Activated B cell treated with CpG ODN at 0.5 μM for 24 hours (primary cell): ENCODE measurements at regions of chr22 and their contacts with region 1.

Region 1: DNA sequence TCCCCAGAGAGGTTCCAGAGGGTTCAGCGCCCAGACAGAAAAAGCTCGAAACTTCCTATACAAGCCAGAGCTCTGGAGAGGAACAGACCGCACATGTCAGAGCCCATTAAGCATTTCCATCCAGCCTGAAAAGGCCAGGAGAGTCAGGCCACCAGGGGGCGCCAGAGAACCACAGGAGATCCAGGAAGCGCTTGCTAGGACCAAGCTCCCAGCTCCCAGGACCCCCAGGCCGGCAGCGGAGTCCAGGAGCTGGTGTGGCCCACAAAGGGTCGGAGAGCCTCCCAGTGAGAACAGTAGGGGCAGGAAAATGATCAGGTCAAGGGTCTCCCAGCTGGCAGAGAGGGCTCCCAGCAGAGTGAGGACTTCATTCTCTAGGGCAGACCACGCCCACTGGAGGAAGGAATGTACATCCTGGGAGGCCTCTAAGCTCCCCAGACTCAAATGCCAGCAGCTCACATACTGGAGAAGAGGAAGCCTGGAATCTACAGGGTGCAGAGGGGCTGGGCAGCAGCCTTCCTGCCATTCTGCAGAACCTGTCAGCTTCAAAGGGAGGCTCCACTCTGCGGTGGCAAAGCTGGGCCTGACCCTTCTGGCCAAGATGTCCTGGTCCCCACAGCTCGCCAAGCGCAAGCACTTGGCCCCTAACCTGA is 2.1 kb upstream of the MEI1 start:
- DNase-seq: peak; percentile 91
- ATAC-seq: peak; percentile 83
- H3K4me3 Mint-ChIP-seq: peak overlapping the region; percentile 63
- H3K27ac Mint-ChIP-seq: peak overlapping the region; percentile 72
- H3K4me1 Mint-ChIP-seq: peaks cover 12% of the 10 kb centered on the region
- H3K27me3 Mint-ChIP-seq: no peaks in the 10 kb centered on the region
- CTCF ChIP-seq: peak; percentile 51

Region 2: DNA sequence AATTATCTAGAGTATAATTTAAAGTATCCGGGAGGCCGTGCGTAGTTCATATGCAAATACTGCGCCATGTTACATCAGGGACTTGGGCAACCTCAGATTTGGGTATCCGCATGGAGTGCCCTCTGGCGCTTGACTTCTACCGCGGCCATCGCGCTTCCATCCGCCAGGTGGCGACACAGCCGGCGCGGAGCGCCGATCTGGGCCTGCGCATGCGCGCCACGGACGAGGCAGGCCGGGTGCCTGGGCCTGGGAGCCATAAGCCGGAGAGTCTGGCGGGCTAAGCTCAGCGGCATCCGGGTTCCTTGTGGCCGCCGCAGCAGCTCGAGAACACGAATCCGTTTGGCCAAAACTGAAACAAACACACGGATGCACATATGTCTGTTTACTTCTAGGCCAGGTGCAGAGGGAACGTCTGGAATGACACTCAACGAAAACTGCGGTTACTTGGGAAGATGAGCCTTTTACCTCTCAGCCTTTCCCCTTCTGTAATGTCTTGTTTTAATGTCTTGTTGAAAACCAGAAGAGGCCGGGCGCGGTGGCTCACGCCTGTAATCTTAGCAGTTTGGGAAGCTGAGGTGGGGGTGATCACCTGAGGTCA is 30.5 kb before region 1 on chr22:
- CTCF ChIA-PET with region 1: interaction called, 18 read pairs
- POLR2A ChIA-PET with region 1: interaction called, 7 read pairs
- intact Hi-C with region 1: no loop called
- DNase-seq: peak; percentile 94
- ATAC-seq: peak; percentile 95
- H3K4me3 Mint-ChIP-seq: peak overlapping the region; percentile 84
- H3K27ac Mint-ChIP-seq: peak overlapping the region; percentile 92
- H3K4me1 Mint-ChIP-seq: peaks cover 5% of the 10 kb centered on the region
- H3K27me3 Mint-ChIP-seq: no peaks in the 10 kb centered on the region
- CTCF ChIP-seq: peak; percentile 74

Region 3: DNA sequence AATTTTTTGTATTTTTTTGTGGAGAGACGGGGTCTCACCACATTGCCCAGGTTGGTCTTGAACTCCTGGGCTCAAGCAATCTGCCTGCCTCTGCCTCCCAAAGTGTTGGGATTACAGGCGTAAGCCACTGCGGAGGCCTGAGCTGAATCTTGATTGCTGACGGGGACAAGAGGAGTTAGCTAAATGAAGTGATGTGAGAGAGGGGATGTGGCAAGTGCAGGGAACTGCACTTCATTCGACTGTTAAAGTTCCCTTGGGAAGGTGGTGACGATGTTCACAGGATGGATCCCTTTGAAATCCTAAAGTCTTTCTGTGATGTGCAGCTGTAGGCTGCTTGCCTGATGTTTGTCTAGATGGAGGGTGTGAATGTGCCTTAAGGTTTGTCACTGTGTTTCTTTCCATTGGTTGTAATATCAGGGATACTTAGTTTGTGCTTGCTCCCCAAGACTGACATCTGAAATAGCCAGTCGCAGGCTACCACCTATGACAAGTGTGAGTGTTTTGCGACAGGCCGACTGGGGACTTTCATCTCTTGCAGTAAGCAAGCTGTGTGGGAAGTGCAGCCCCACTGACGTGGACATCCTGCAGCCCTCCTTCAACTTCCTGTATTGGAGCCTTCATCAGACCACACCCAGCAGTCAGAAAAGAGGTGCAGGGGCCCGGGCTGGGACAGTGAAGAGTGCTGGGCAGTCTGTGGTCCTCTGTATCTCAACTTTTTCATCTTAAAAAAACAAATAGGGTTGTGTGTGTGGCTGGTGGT is 83.7 kb after region 1 on chr22:
- CTCF ChIA-PET with region 1: interaction called, 28 read pairs
- POLR2A ChIA-PET with region 1: interaction called, 8 read pairs
- intact Hi-C with region 1: loop called (anchors 5 kb)
- DNase-seq: peak; percentile 60
- ATAC-seq: peak; percentile 96
- H3K4me3 Mint-ChIP-seq: peak overlapping the region; percentile 86
- H3K27ac Mint-ChIP-seq: peak overlapping the region; percentile 93
- H3K4me1 Mint-ChIP-seq: peaks cover 40% of the 10 kb centered on the region
- H3K27me3 Mint-ChIP-seq: no peaks in the 10 kb centered on the region
- CTCF ChIP-seq: no peak

Region 4: DNA sequence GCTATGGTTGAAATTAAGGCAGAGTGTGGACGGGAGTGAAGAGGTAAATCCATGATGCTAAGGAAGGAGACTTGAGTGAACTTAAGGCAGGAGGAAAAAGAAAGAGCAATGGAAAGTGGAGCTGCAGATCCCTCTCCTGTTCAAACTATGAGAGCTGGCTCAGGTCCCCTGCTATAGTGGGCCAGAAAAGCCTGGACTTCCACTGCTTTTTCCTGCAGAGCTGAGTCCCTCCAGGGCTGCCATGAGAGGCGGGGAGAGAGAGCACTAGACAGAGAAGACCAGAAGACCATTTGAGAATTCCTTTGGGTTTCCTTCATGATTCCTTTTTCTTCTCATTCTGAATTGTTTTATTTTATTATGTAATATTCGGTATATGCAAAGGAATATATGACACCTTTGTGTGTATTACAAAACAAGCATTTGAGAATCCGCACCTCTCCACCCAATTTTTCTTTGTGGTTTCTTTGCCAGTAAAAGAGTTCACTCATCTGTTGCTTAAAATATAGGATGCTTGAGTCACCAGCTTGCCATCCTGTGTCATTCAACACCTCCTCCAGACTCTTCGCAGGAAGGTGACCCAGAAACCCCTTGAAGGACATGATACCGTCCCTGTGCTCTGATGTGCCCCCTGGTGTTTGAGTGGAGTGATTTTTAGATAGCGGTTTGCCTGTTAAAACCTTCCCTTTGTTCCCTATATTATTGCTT is 160.1 kb after region 1 on chr22:
- CTCF ChIA-PET with region 1: interaction called, 15 read pairs
- POLR2A ChIA-PET with region 1: interaction called, 7 read pairs
- intact Hi-C with region 1: loop called (anchors 1 kb)
- DNase-seq: no peak
- ATAC-seq: peak; percentile 18
- H3K4me3 Mint-ChIP-seq: peak overlapping the region; percentile 45
- H3K27ac Mint-ChIP-seq: peak overlapping the region; percentile 77
- H3K4me1 Mint-ChIP-seq: peaks cover 72% of the 10 kb centered on the region
- H3K27me3 Mint-ChIP-seq: no peaks in the 10 kb centered on the region
- CTCF ChIP-seq: no peak

Region 5: GRCh38 chr22:41946629-41947423 is 249.6 kb after region 1 on chr22 and contains the start of gene CENPM:
- CTCF ChIA-PET with region 1: interaction called, 81 read pairs
- POLR2A ChIA-PET with region 1: interaction called, 34 read pairs
- intact Hi-C with region 1: no loop called
- DNase-seq: peak; percentile 84
- ATAC-seq: peak; percentile 91
- H3K4me3 Mint-ChIP-seq: peak within 1 kb of the TSS; percentile 91
- H3K27ac Mint-ChIP-seq: peak within 1 kb of the TSS; percentile 80
- H3K4me1 Mint-ChIP-seq: peaks cover 52% of the 10 kb centered on the region
- H3K27me3 Mint-ChIP-seq: no peaks in the 10 kb centered on the region
- CTCF ChIP-seq: no peak
- total RNA-seq, gene CENPM: 9.6 and 13.3 TPM in 2 replicates

Region 6: GRCh38 chr22:42114721-42115120 is 417.5 kb after region 1 on chr22:
- CTCF ChIA-PET with region 1: interaction called, 3 read pairs
- POLR2A ChIA-PET with region 1: no interaction called
- intact Hi-C with region 1: loop called (anchors 2 kb)
- DNase-seq: no peak
- ATAC-seq: no peak
- H3K4me3 Mint-ChIP-seq: no peak overlapping the region
- H3K27ac Mint-ChIP-seq: no peak overlapping the region
- H3K4me1 Mint-ChIP-seq: peaks cover 3% of the 10 kb centered on the region
- H3K27me3 Mint-ChIP-seq: no peaks in the 10 kb centered on the region
- CTCF ChIP-seq: no peak